A673 (cell line): ENCODE measurements at regions of chr6 and their contacts with region 1.

Region 1: GRCh38 chr6:111985202-111985731 is 68.6 kb upstream of the CCN6 start:
- DNase-seq: no peak
- H3K4me3 ChIP-seq: no peak overlapping the region
- H3K27ac ChIP-seq: no peak overlapping the region
- H3K4me1 ChIP-seq: no peaks in the 10 kb centered on the region
- H3K27me3 ChIP-seq: no peaks in the 10 kb centered on the region
- CTCF ChIP-seq: no peak

Region 2: DNA sequence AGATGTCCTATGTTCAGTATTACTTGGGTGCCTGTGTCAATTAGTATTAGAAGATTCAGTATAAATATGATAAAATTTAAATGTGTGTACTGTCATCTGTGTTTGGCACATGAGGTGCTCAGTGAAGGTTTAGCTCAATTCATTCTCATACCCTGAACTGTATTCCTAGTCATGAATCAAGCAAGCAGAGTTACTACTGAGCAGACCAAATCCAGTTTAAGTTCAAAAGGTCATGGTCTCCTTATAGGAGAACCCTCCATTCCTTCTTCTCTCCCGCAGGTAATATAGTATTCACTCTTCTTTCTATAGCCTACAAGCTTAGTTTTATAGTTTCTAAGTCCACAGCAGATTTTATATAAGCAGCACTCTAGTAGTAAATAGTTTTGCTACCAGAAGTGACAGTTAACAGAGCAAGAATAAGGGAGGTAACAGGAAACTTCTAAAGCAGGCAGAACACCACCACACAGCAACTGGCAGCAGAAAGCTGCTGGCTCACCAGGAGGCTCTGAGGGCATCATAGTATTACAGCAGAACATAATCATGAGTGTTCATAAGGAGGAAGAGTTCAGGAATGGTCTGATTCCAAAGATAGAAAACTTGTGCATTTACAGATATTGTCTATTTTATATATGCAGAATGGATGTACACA is 764.8 kb before region 1 on chr6:
- CTCF ChIA-PET with region 1: no interaction called
- POLR2A ChIA-PET with region 1: no interaction called
- intact Hi-C with region 1: no loop called
- DNase-seq: no peak
- H3K4me3 ChIP-seq: no peak overlapping the region
- H3K27ac ChIP-seq: no peak overlapping the region
- H3K4me1 ChIP-seq: no peaks in the 10 kb centered on the region
- H3K27me3 ChIP-seq: no peaks in the 10 kb centered on the region
- CTCF ChIP-seq: no peak

Region 3: DNA sequence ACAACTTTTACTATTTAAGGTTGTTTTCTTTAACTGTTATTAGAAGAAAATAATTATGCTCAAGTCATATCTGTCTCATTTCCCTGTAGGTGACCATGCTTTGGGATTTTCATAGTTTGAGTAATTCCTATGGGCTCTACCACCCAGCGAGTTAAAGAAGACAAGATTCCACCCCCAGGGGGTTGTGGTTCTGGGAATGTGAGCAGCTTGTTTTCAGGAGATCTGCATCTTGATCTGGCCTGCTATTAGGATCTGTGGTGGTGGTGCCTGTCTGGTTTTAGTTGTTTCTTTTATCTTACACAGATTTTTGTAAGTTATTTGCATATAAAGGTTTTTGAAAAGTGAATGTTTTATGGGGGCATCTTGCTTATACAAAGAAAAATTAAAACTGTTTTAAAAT is 482.1 kb before region 1 on chr6:
- CTCF ChIA-PET with region 1: no interaction called
- POLR2A ChIA-PET with region 1: no interaction called
- intact Hi-C with region 1: no loop called
- DNase-seq: peak; percentile 54
- H3K4me3 ChIP-seq: no peak overlapping the region
- H3K27ac ChIP-seq: peak overlapping the region; percentile 70
- H3K4me1 ChIP-seq: peaks cover 32% of the 10 kb centered on the region
- H3K27me3 ChIP-seq: no peaks in the 10 kb centered on the region
- CTCF ChIP-seq: no peak

Region 4: DNA sequence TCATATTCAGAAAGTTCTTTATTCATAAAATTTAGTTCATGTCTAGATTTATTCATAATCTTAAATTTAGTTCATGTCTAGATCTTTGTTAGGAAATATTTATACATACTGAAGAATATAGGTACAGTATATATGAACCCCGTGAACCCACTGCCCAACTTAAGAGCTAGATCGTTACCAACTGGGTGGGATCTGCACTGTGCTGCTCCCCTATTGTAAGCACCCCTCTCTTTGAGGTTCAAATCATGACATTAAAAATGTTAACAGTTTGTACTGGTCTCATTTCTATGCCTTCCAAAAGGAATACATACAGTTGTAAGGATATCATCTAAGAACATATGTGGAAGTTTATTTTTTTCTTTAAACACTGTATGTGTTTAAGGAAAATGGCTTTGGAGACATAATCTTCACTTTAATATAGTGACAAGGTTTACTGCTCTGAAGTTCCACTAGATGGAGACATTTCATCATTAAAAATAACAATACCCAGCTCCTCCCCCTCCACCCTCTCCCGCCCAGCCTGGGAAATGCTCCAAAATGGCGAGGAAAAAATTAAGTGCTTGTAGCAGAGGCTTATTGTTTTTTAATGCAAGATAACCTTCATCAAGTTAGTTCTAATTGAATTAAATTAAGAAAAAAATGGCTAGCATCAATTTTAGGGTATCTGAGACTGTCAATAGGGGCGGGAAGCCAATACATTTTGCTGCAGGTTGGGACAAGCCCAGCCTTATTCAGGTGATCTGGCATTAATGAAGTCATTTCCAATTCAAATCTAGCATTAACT is 275.5 kb before region 1 on chr6:
- CTCF ChIA-PET with region 1: no interaction called
- POLR2A ChIA-PET with region 1: no interaction called
- intact Hi-C with region 1: no loop called
- DNase-seq: peak; percentile 84
- H3K4me3 ChIP-seq: no peak overlapping the region
- H3K27ac ChIP-seq: no peak overlapping the region
- H3K4me1 ChIP-seq: no peaks in the 10 kb centered on the region
- H3K27me3 ChIP-seq: no peaks in the 10 kb centered on the region
- CTCF ChIP-seq: peak; percentile 76

Region 5: DNA sequence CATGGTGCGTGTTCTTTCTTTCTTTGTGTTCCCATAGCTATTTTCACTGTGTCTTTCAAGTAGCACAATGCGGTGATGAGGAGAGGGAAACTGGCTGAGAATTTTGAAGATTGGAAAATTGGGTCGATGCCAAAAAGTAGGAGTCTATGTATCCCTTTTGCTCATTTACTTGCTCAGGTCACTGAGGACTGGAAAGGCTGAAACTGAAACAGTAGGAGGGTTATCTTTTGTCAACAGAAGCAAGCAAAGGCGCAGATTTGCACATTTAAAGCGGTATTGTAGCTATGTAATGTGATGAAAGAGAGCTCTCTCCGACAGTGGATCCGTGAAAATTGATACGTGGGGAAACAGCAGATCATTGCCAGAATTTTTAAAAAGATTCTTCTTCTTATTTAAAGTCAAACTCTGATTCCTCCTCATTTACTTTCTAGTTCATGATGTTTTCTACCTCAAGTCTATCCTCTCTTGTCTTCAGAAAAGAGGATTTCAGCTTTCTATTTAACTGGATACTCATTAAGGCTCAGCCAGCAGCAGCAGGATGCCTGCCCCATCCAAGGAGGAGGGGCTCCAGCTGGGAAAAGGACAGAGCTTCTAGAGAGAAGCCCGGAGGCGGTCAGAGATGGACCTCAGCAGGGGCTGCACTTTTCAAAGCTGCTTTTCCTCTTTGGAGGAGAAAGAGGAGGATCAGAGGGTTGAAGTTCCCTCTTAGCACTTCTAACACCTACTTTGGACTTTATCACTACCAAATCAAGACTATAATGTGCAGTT is 96.2 kb before region 1 on chr6:
- CTCF ChIA-PET with region 1: no interaction called
- POLR2A ChIA-PET with region 1: no interaction called
- intact Hi-C with region 1: no loop called
- DNase-seq: peak; percentile 46
- H3K4me3 ChIP-seq: peak overlapping the region; percentile 12
- H3K27ac ChIP-seq: no peak overlapping the region
- H3K4me1 ChIP-seq: peaks cover 13% of the 10 kb centered on the region
- H3K27me3 ChIP-seq: no peaks in the 10 kb centered on the region
- CTCF ChIP-seq: no peak

Region 6: DNA sequence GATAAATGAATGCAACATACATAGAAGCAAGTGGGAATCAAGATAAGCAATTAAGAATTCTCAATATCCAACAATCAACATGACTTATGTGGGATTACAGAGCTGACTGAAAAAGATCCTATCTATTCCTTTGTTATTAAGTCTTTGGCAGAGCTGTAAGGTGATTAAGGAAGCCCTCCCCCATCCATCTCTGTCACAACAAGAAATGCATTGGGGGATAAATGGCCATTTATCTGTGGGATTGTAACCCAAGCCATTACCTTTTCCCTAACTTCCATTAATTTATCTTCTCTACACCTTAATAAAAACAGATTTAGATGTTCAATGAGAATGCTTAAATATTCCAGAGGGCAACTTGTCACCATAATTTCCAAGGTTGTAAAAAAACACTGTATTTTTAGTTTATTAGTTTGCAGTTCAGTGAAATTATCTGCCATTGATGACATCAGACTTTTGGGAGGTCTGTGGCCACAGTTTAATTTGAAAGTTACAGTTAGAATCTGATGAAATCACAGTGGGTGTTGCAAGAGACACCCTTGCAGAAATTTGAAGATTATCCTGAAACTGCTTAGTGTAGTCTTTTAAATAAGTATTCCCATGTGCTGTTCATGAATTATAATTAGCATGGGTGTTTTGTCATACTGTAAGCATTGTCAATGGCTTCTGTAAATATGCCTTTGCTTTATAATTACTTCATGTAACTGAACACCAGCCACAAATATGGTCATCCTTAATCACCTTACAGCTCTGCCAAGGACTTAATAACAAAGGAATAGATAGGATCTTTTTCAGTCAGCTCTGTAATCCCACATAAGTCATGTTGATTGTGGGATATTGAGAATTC is 62.6 kb before region 1 on chr6:
- CTCF ChIA-PET with region 1: no interaction called
- POLR2A ChIA-PET with region 1: no interaction called
- intact Hi-C with region 1: loop called (anchors 10 kb)
- DNase-seq: peak; percentile 51
- H3K4me3 ChIP-seq: no peak overlapping the region
- H3K27ac ChIP-seq: peak overlapping the region; percentile 29
- H3K4me1 ChIP-seq: peaks cover 19% of the 10 kb centered on the region
- H3K27me3 ChIP-seq: no peaks in the 10 kb centered on the region
- CTCF ChIP-seq: no peak